Naive thymus-derived CD4-positive, alpha-beta T cell (primary cell): ENCODE measurements at regions of chr11 and their contacts with region 1.

Region 1: GRCh38 chr11:128757235-128757711 is 63.4 kb downstream of the FLI1 start:
- DNase-seq: peak; percentile 27 to 74 (median 61)
- ATAC-seq: peak; percentile 96
- H3K4me3 ChIP-seq: no peak overlapping the region
- H3K4me3 Mint-ChIP-seq: peak overlapping the region in 8 of 10 donors; percentile 9 to 62 (median 40)
- H3K27ac ChIP-seq: no peak overlapping the region
- H3K27ac Mint-ChIP-seq: peak overlapping the region; percentile 43 to 92 (median 84)
- H3K4me1 ChIP-seq: peaks cover 36 to 49% of the 10 kb centered on the region in 2 donors
- H3K4me1 Mint-ChIP-seq: peaks cover 70 to 96% (median 89%) of the 10 kb centered on the region in 7 donors
- H3K27me3 ChIP-seq: no peaks in the 10 kb centered on the region
- H3K27me3 Mint-ChIP-seq: no peaks in the 10 kb centered on the region

Region 2: GRCh38 chr11:128026596-128026995 is 730.7 kb before region 1 on chr11:
- CTCF ChIA-PET with region 1: interaction called, 3 read pairs
- POLR2A ChIA-PET with region 1: no interaction called
- intact Hi-C with region 1: loop called (anchors 1 to 10 kb)
- DNase-seq: no peak
- ATAC-seq: peak; percentile 34
- H3K4me3 ChIP-seq: no peak overlapping the region
- H3K4me3 Mint-ChIP-seq: no peak overlapping the region
- H3K27ac ChIP-seq: no peak overlapping the region
- H3K27ac Mint-ChIP-seq: peak overlapping the region in 1 of 9 donors; percentile 12
- H3K4me1 ChIP-seq: peaks cover 0 to under 1% of the 10 kb centered on the region in 2 donors
- H3K4me1 Mint-ChIP-seq: peaks cover 0 to 5% (median 3%) of the 10 kb centered on the region in 7 donors
- H3K27me3 ChIP-seq: no peaks in the 10 kb centered on the region
- H3K27me3 Mint-ChIP-seq: peaks cover 0 to 37% (median 2%) of the 10 kb centered on the region in 5 donors

Region 3: DNA sequence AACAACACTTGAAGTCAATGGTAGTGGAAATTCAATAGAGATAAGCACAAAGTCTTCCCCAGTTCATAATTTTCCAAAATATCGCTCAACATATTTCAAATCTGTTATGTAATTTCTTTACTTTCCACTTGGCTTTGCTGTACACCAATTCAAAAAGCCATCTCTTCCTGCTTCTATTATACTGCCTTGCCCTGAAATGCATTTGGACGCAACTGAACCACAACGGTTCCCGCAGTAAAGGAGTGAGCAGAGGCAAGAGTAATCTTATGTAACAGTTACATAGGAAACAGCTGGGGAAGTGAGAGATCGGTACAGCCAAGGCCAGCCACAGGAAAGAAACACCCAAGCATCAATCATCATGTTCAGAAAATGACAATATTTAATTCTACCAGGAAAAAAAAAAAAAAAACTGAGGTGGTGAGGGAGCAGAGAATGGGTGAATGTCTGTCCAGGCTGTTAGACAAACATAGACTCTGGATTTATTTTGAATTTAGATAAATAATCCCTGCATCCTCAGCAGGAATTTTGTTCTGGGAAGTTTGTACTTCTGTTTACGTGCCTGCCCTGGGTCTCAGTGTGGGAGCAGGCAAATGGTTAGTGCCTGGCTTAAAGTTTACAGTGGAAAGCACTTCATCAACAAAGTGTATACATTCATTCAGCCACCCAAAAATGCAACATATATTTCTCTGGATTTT is 562.1 kb before region 1 on chr11:
- CTCF ChIA-PET with region 1: interaction called, 4 read pairs
- POLR2A ChIA-PET with region 1: no interaction called
- intact Hi-C with region 1: loop called (anchors 1 to 5 kb)
- DNase-seq: peak in 7 of 9 donors; percentile 63 to 85 (median 76)
- ATAC-seq: peak; percentile 86
- H3K4me3 ChIP-seq: no peak overlapping the region
- H3K4me3 Mint-ChIP-seq: peak overlapping the region in 9 of 10 donors; percentile 1 to 67 (median 49)
- H3K27ac ChIP-seq: peak overlapping the region; percentile 17
- H3K27ac Mint-ChIP-seq: peak overlapping the region in 8 of 9 donors; percentile 72 to 87 (median 81)
- H3K4me1 ChIP-seq: peaks cover 31 to 33% of the 10 kb centered on the region in 2 donors
- H3K4me1 Mint-ChIP-seq: peaks cover 31 to 45% (median 41%) of the 10 kb centered on the region in 7 donors
- H3K27me3 ChIP-seq: no peaks in the 10 kb centered on the region
- H3K27me3 Mint-ChIP-seq: peaks cover 0 to 2% (median 0%) of the 10 kb centered on the region in 5 donors

Region 4: GRCh38 chr11:128575961-128576350 is 181.3 kb before region 1 on chr11:
- CTCF ChIA-PET with region 1: no interaction called
- POLR2A ChIA-PET with region 1: no interaction called
- intact Hi-C with region 1: no loop called
- DNase-seq: no peak
- ATAC-seq: peak; percentile 66
- H3K4me3 ChIP-seq: no peak overlapping the region
- H3K4me3 Mint-ChIP-seq: peak overlapping the region in 1 of 10 donors; percentile 34
- H3K27ac ChIP-seq: no peak overlapping the region
- H3K27ac Mint-ChIP-seq: no peak overlapping the region
- H3K4me1 ChIP-seq: peaks cover 0 to 23% of the 10 kb centered on the region in 2 donors
- H3K4me1 Mint-ChIP-seq: peaks cover 24 to 56% (median 41%) of the 10 kb centered on the region in 7 donors
- H3K27me3 ChIP-seq: no peaks in the 10 kb centered on the region
- H3K27me3 Mint-ChIP-seq: no peaks in the 10 kb centered on the region

Region 5: GRCh38 chr11:128720522-128720985 is 36.7 kb before region 1 on chr11:
- CTCF ChIA-PET with region 1: interaction called, 5 read pairs
- POLR2A ChIA-PET with region 1: interaction called, 6 read pairs
- intact Hi-C with region 1: loop called (anchors 1 to 2 kb)
- DNase-seq: peak in 7 of 9 donors; percentile 53 to 68 (median 59)
- ATAC-seq: peak; percentile 51
- H3K4me3 ChIP-seq: peak overlapping the region; percentile 41
- H3K4me3 Mint-ChIP-seq: peak overlapping the region; percentile 78 to 92 (median 85)
- H3K27ac ChIP-seq: peak overlapping the region; percentile 73
- H3K27ac Mint-ChIP-seq: peak overlapping the region; percentile 86 to 99 (median 96)
- H3K4me1 ChIP-seq: peaks cover 99 to 100% of the 10 kb centered on the region in 2 donors
- H3K4me1 Mint-ChIP-seq: peaks cover 95 to 100% (median 100%) of the 10 kb centered on the region in 7 donors
- H3K27me3 ChIP-seq: no peaks in the 10 kb centered on the region
- H3K27me3 Mint-ChIP-seq: no peaks in the 10 kb centered on the region

Region 6: DNA sequence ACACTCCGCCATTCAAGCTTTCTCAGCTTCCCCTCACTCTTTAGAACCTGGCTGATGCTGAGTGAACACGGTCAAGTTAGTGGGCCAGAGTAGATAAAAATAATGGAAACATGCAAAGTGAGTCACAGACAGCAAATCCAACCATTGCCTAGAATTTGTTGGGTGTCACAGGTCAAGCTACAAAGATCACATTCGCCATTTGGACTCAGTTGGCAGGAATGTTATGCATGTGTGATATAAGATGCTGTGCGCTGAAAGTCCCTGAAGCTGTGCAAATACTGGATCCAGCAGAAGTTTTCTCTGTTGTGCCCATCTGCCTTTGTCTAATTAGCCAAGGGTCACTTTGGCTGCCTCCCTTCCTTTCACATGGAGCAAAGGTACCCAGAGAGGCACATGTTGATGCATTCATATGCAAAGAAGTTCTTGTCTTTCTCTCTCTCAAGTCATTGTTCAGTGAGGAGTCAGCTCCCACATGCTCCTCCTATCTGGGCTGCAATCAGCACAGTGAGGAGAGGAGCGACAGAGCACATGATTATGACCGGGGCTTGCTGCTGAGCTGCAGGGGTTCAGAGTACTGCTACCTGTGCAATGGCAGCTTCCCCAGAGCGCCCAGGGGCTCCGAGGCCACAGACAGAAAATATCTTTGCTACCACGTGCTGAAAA is 23.7 kb before region 1 on chr11:
- CTCF ChIA-PET with region 1: interaction called, 12 read pairs
- POLR2A ChIA-PET with region 1: interaction called, 9 read pairs
- intact Hi-C with region 1: loop called in 1 of 2 experiments (anchors 2 kb)
- DNase-seq: peak in 3 of 9 donors; percentile 27 to 43 (median 37)
- ATAC-seq: peak; percentile 39
- H3K4me3 ChIP-seq: peak overlapping the region; percentile 20
- H3K4me3 Mint-ChIP-seq: peak overlapping the region; percentile 79 to 92 (median 85)
- H3K27ac ChIP-seq: peak overlapping the region; percentile 41
- H3K27ac Mint-ChIP-seq: peak overlapping the region; percentile 85 to 98 (median 90)
- H3K4me1 ChIP-seq: peaks cover 96 to 100% of the 10 kb centered on the region in 2 donors
- H3K4me1 Mint-ChIP-seq: peaks cover 81 to 100% (median 98%) of the 10 kb centered on the region in 7 donors
- H3K27me3 ChIP-seq: no peaks in the 10 kb centered on the region
- H3K27me3 Mint-ChIP-seq: no peaks in the 10 kb centered on the region

Region 7: GRCh38 chr11:129041611-129042018 is 284.3 kb after region 1 on chr11:
- CTCF ChIA-PET with region 1: no interaction called
- POLR2A ChIA-PET with region 1: no interaction called
- intact Hi-C with region 1: no loop called
- DNase-seq: no peak
- ATAC-seq: no peak
- H3K4me3 ChIP-seq: no peak overlapping the region
- H3K4me3 Mint-ChIP-seq: no peak overlapping the region
- H3K27ac ChIP-seq: no peak overlapping the region
- H3K27ac Mint-ChIP-seq: no peak overlapping the region
- H3K4me1 ChIP-seq: no peaks in the 10 kb centered on the region
- H3K4me1 Mint-ChIP-seq: no peaks in the 10 kb centered on the region
- H3K27me3 ChIP-seq: no peaks in the 10 kb centered on the region
- H3K27me3 Mint-ChIP-seq: peaks cover 0 to 2% (median 0%) of the 10 kb centered on the region in 5 donors